ENCODE measurements at regions of chr11 and their contacts with region 1.

Region 1: GRCh38 chr11:72460091-72460647 is 25.8 kb upstream of the CLPB start:
- DNase-seq: no peak
- H3K4me3 Mint-ChIP-seq: no peak overlapping the region
- H3K27ac Mint-ChIP-seq: no peak overlapping the region
- H3K4me1 Mint-ChIP-seq: no peaks in the 10 kb centered on the region
- H3K27me3 Mint-ChIP-seq: peaks cover 61% of the 10 kb centered on the region

Region 2: GRCh38 chr11:72446902-72447769 is 13.0 kb before region 1 on chr11:
- CTCF ChIA-PET with region 1: interaction called, 13 read pairs
- DNase-seq: no peak
- H3K4me3 Mint-ChIP-seq: no peak overlapping the region
- H3K27ac Mint-ChIP-seq: no peak overlapping the region
- H3K4me1 Mint-ChIP-seq: peaks cover under 1% of the 10 kb centered on the region
- H3K27me3 Mint-ChIP-seq: peaks cover 23% of the 10 kb centered on the region

Measured in activated naive CD4-positive, alpha-beta T cell treated with anti-CD3 and anti-CD28 coated beads, Interleukin-2, amount 10 ng/mL, durations not matched to agents 7 days and 5 days (primary cell).